Right cardiac atrium (tissue), 5 donors: ENCODE measurements at regions of chr12 and their contacts with region 1.

Region 1: DNA sequence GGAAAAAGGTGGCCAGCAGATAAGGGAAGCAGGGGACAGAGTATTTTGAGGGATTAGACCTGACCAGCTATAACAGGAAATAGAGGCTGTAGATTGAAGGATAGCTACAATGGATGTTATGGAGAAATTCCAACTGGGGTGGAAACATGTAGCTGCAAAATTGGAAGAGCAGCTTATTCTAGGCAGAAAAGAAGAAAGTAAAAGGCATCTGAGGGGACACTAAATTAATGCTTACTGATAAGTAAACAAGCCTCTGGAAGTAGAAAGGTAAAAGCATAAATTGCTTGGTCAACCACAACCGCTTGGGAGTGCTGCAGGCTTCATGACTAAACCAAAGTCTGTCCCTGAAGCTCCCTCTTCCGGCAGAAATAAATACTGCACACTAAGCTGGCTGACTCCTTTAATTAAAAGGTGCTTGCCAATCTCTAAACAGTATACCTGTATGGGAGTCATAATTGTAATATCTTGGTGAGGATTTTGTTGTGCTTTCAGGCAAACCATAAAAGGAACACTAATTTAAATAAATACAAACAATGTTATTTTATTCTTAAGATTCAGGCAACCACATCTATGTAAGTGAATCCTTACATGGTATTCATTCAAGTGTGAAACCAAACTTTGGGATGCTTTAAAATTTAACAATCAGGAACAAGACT is 7.7 kb downstream of the UBC start:
- DNase-seq: peak; percentile 79 to 90 (median 82)
- ATAC-seq: peak; percentile 37 to 46
- H3K4me3 ChIP-seq: no peak overlapping the region
- H3K27ac ChIP-seq: peak overlapping the region; percentile 26
- H3K4me1 ChIP-seq: peaks cover 12% of the 10 kb centered on the region
- H3K27me3 ChIP-seq: no peaks in the 10 kb centered on the region

Region 2: GRCh38 chr12:124786061-124786964 is 120.4 kb before region 1 on chr12:
- intact Hi-C with region 1: loop called in 1 of 4 experiments (anchors 10 kb)
- DNase-seq: peak; percentile 88 to 95 (median 92)
- ATAC-seq: peak; percentile 97
- H3K4me3 ChIP-seq: peak overlapping the region; percentile 15
- H3K27ac ChIP-seq: no peak overlapping the region
- H3K4me1 ChIP-seq: no peaks in the 10 kb centered on the region
- H3K27me3 ChIP-seq: no peaks in the 10 kb centered on the region

Region 3: GRCh38 chr12:124852329-124852831 is 54.4 kb before region 1 on chr12:
- intact Hi-C with region 1: no loop called
- DNase-seq: peak; percentile 74 to 88 (median 86)
- ATAC-seq: peak; percentile 65 to 73
- H3K4me3 ChIP-seq: no peak overlapping the region
- H3K27ac ChIP-seq: peak overlapping the region; percentile 77
- H3K4me1 ChIP-seq: peaks cover 16% of the 10 kb centered on the region
- H3K27me3 ChIP-seq: no peaks in the 10 kb centered on the region

Region 4: DNA sequence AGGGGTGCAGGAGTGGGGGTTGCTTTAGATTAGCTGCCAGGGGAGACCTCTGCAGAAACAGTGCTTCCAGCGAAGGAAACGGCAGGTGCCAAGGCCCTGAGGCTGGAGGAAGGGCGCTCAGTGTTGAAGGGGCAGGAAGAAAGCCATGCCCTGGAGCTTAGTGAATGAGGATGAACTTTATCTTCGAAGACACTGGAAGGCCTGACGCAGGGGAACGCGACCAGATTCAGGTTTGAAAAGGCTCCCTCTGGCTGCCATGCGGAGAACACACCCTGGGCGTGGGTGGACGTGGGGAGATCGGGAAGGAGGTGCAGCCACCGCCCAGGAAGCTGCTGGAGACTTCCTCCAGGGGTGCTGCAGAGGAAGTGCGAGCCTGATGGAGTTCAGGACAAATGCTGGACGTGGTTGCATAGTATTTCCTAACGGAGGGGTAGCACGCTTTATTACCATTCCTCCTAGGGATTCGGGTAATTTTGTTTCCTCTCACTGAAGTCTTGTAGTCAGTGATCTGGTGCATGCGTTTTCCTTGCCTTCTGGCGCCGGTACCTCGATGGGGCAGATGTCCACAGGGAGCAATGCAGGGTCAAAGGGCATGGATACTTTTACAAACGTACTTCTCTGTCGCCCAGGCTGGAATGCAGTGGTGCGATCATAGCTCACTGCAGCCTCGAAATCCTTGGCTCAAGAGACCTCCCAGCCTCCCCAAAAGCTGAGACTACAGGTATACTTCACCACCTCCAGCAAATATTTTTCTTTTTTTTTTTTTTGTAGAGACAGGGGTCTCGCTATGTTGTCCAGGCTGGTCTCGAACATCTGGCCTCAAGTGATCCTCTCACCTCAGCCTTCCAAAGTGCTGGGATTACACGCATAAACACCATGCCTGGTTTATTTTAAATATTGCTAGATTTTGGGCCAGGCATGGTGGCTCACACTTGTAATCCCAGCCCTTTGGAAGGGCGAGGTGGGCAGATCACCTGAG is 34.1 kb after region 1 on chr12:
- intact Hi-C with region 1: loop called in 1 of 4 experiments (anchors 5 kb)
- DNase-seq: peak; percentile 90 to 95 (median 95)
- ATAC-seq: peak; percentile 82 to 84
- H3K4me3 ChIP-seq: peak overlapping the region; percentile 52
- H3K27ac ChIP-seq: peak overlapping the region; percentile 84
- H3K4me1 ChIP-seq: peaks cover 2% of the 10 kb centered on the region
- H3K27me3 ChIP-seq: no peaks in the 10 kb centered on the region